H1 (cell line): ENCODE measurements at regions of chr18 and their contacts with region 1.

Region 1: GRCh38 chr18:48230467-48231113 is 178.6 kb downstream of the ZBTB7C start:
- DNase-seq: peak; percentile 34 to 84
- H3K4me3 ChIP-seq: no peak overlapping the region
- H3K27ac ChIP-seq: no peak overlapping the region
- H3K4me1 ChIP-seq: peaks cover 0 to 1% (median 0%) of the 10 kb centered on the region in 4 experiments; a peak in 1 of 7 replicates
- H3K27me3 ChIP-seq: no peaks in the 10 kb centered on the region
- CTCF ChIP-seq: peak; percentile 92 to 98 (median 97)
- EP300 ChIP-seq: no peak
- POLR2A ChIP-seq: no peak
- RAD21 ChIP-seq: peak; percentile 97

Region 2: GRCh38 chr18:48030616-48031480 is 199.7 kb before region 1 on chr18:
- CTCF ChIA-PET with region 1: interaction called, 72 read pairs
- POLR2A ChIA-PET with region 1: no interaction called
- DNase-seq: peak; percentile 9 to 52
- H3K4me3 ChIP-seq: no peak overlapping the region
- H3K27ac ChIP-seq: no peak overlapping the region
- H3K4me1 ChIP-seq: peaks cover 0 to 2% (median under 1%) of the 10 kb centered on the region in 4 experiments; a peak in 2 of 7 replicates
- H3K27me3 ChIP-seq: no peaks in the 10 kb centered on the region; a peak in 1 of 7 replicates
- CTCF ChIP-seq: peak; percentile 68 to 93 (median 85)
- EP300 ChIP-seq: no peak
- POLR2A ChIP-seq: no peak
- RAD21 ChIP-seq: peak; percentile 85 to 89

Region 3: DNA sequence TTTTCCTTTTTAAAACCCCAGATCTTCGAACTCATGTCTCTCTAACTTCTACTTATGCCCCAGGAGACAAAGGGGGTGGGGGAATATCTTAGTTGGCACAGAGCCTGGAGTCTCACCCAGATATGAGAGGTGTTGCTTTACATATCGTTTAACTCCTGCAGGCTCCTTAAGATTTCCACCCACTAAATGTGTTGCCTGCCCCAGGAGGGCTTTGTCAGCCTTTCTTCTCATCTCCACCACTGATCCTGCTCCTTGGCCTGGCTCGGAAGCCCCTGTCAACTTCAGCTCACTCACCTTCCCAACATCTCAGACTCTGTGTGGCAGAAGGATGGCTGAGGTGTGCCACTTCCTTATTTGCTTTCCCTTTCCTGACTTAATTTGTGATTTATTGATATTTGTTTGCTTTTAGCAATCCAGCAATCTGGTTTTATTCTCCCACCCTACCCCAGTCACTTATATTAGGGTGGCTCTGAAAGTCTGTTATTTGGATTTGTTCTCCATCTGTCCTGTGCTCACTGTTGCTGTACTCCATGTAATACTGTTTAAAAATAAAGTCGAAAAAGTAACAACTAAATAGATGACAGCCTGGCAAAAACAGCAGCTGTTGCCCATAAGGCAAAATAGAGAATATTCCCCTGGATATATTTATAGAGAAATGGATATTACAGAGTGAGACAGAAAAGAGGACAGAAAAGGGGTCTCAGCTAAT is 22.0 kb before region 1 on chr18:
- CTCF ChIA-PET with region 1: interaction called, 21 read pairs
- POLR2A ChIA-PET with region 1: no interaction called
- DNase-seq: no peak
- H3K4me3 ChIP-seq: no peak overlapping the region
- H3K27ac ChIP-seq: no peak overlapping the region
- H3K4me1 ChIP-seq: no peaks in the 10 kb centered on the region
- H3K27me3 ChIP-seq: no peaks in the 10 kb centered on the region
- CTCF ChIP-seq: no peak
- EP300 ChIP-seq: no peak
- POLR2A ChIP-seq: no peak
- RAD21 ChIP-seq: no peak

Region 4: GRCh38 chr18:48295585-48296311 is 65.2 kb after region 1 on chr18:
- CTCF ChIA-PET with region 1: interaction called, 28 read pairs
- POLR2A ChIA-PET with region 1: no interaction called
- DNase-seq: peak in 1 of 2 experiments; percentile 64
- H3K4me3 ChIP-seq: no peak overlapping the region
- H3K27ac ChIP-seq: no peak overlapping the region
- H3K4me1 ChIP-seq: peaks cover 0 to 11% (median 6%) of the 10 kb centered on the region in 4 experiments; a peak in 5 of 7 replicates
- H3K27me3 ChIP-seq: no peaks in the 10 kb centered on the region
- CTCF ChIP-seq: peak; percentile 70 to 80 (median 76)
- EP300 ChIP-seq: no peak
- POLR2A ChIP-seq: no peak
- RAD21 ChIP-seq: peak; percentile 67 to 75

Region 5: GRCh38 chr18:48374423-48375149 is 144.0 kb after region 1 on chr18:
- CTCF ChIA-PET with region 1: interaction called, 11 read pairs
- POLR2A ChIA-PET with region 1: no interaction called
- DNase-seq: no peak
- H3K4me3 ChIP-seq: no peak overlapping the region
- H3K27ac ChIP-seq: no peak overlapping the region
- H3K4me1 ChIP-seq: peaks cover 0 to 10% (median 0%) of the 10 kb centered on the region in 4 experiments; a peak in 3 of 7 replicates
- H3K27me3 ChIP-seq: no peaks in the 10 kb centered on the region; a peak in 1 of 7 replicates
- CTCF ChIP-seq: no peak
- EP300 ChIP-seq: no peak
- POLR2A ChIP-seq: no peak
- RAD21 ChIP-seq: no peak

Region 6: GRCh38 chr18:48436907-48437306 is 206.3 kb after region 1 on chr18:
- CTCF ChIA-PET with region 1: interaction called, 160 read pairs
- POLR2A ChIA-PET with region 1: no interaction called
- DNase-seq: no peak
- H3K4me3 ChIP-seq: no peak overlapping the region
- H3K27ac ChIP-seq: no peak overlapping the region
- H3K4me1 ChIP-seq: no peaks in the 10 kb centered on the region
- H3K27me3 ChIP-seq: 0 out of 7 replicates have a peak, but pooled peaks cover 0 to 2% (median 0%) of the 10 kb centered on the region in 4 experiments
- CTCF ChIP-seq: no peak
- EP300 ChIP-seq: no peak
- POLR2A ChIP-seq: no peak
- RAD21 ChIP-seq: no peak